ENCODE measurements at regions of chr20 and their contacts with region 1.

Region 1: GRCh38 chr20:49148601-49149000 is 39.5 kb downstream of the STAU1 start:
- DNase-seq: no peak
- H3K27ac ChIP-seq: no peak overlapping the region
- CTCF ChIP-seq: no peak

Region 2: GRCh38 chr20:49063279-49063678 is 85.3 kb before region 1 on chr20:
- CTCF ChIA-PET with region 1: interaction called, 11 read pairs
- POLR2A ChIA-PET with region 1: no interaction called
- DNase-seq: no peak
- H3K27ac ChIP-seq: no peak overlapping the region
- CTCF ChIP-seq: no peak

Region 3: DNA sequence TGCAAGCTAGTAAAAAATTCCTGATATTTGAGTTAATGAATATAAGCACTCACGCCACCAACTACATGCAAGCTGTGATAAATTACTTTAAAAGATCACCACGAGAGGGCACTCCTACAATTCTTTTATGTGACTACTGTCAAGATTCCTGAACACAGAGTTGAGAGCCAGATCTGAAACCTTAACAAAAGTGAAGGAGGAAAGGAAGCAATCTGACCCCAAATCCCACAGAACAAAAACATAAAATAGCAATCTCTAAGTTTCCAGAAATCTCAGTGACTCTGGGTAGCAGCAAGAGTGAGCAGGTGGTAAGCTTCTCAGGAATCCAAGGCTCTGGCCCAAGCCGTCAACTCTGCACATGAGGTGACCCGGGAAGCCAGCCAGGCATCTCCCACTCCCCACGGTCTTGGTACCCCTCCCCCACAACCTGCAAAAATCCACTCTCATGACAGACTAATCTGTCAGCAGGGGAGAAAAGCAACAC is 15.6 kb before region 1 on chr20:
- CTCF ChIA-PET with region 1: interaction called, 19 read pairs
- POLR2A ChIA-PET with region 1: no interaction called
- DNase-seq: peak; percentile 71
- H3K27ac ChIP-seq: peak overlapping the region; percentile 2; the same call in 1 of the 2 replicates
- CTCF ChIP-seq: peak; percentile 80

Region 4: GRCh38 chr20:49216991-49217578 is 68.5 kb after region 1 on chr20:
- CTCF ChIA-PET with region 1: interaction called, 12 read pairs
- POLR2A ChIA-PET with region 1: no interaction called
- DNase-seq: peak; percentile 89
- H3K27ac ChIP-seq: peak overlapping the region; percentile 23; the same call in 1 of the 2 replicates
- CTCF ChIP-seq: peak; percentile 98

Region 5: GRCh38 chr20:49508435-49509199 is 360.0 kb after region 1 on chr20:
- CTCF ChIA-PET with region 1: no interaction called
- POLR2A ChIA-PET with region 1: no interaction called
- DNase-seq: peak; percentile 63
- H3K27ac ChIP-seq: peak overlapping the region; percentile 66
- CTCF ChIP-seq: no peak; the same call in 1 of the 2 replicates